Left colon (tissue), 2 donors: ENCODE measurements at regions of chr10 and their contacts with region 1.

Region 1: GRCh38 chr10:28432210-28432676 is 100.7 kb upstream of the WAC start:
- DNase-seq: peak; percentile 38 to 46
- ATAC-seq: peak; percentile 94

Region 2: GRCh38 chr10:28628184-28628893 is 196.1 kb after region 1 on chr10:
- intact Hi-C with region 1: loop called in 1 of 2 experiments (anchors 10 kb)
- DNase-seq: peak; percentile 51 to 86
- ATAC-seq: peak; percentile 87